ENCODE measurements at regions of chr5 and their contacts with region 1.

Region 1: GRCh38 chr5:173615884-173616576 is 420 bp downstream of the BOD1 start:
- DNase-seq: peak; percentile 73
- CTCF ChIP-seq: peak; percentile 59

Region 2: DNA sequence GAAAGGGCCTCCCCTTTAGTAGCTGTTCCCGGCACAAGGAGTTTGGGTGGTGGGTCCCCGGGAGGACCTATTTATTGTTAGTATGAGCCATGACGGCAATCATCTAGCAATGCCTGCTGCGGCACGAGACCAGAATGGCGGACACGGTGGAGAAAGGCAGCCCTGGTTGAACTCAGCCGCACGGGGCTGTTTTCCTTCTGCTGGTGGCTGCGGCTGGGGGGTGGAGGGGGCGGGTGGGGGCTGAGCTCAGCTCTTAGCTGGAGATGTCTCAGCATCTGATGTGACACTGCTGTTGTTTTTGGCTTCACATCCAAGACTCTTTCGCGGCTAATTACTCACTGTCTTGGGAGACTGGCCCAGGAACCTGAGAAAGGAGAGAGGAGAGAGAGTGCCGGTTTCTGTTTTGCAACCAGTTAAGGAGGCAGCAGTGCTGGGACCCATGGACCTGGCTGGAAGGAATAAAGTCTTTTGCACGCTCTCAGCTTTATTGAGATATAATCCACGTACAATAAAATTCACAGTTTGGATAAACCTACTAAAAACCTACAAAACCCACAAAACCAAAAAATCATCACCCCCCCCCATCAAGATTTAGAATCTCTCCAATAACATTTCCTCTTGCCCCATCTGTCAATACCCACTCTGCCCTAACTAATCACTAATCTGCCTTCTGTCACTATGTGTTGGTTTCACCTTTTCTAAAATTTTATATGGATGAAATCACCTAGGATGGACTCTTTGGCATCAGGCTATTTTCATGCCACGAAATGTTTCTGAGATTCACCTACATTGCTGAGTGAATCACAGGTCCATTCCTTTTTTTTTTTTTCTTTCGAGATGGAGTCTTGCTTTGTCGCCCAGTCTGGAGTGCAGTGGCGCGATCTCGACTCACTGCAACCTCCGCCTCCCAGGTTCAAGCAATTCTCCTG is 1056.8 kb before region 1 on chr5:
- in situ Hi-C with region 1: no loop called
- DNase-seq: no peak
- CTCF ChIP-seq: no peak

Region 3: GRCh38 chr5:172958331-172959046 is 657.5 kb before region 1 on chr5:
- in situ Hi-C with region 1: no loop called
- DNase-seq: peak; percentile 96
- CTCF ChIP-seq: no peak

Region 4: DNA sequence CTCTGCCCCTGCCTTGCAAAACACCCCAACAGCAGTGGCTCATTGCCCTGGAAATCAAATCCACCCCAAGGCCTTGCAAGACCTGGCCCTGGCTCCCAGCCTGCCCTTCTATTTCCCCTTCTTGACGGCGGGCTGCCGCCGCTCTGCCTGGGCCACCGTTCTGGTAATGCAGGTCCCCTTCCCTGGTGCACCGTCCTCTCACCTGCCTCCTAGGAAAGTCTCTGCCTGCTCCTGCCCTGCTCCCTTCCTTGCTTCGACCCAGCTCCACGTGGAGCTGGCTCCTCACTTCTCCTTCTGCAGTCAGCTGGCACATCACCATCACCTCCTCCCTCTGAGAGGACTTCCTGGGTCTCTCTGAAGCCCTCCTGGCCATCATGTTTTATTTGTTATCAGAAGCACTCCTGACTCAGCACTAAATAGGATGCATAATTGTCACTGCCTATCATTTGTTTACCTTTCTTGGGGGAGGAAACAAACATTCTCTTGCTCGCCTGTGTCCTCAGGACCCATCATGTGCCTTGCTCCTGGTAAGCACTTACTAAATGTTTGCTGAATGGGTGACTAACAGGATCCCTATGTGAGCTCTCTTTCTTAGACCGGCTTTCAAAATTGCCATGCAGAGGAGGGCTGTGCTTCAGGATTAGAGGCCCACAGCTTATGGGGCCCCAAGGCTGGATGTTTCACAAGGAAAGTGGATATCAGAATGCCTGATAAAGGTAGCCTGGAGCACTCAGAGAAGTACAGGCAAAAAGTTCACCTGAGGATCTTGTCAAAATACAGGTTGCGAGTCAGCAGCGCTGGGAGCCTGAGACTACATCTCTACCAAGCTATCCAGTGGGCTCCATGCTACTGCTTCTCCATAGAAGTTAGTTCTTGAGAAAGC is 353.4 kb after region 1 on chr5:
- in situ Hi-C with region 1: loop called (anchors 5 kb)
- DNase-seq: peak; percentile 20
- CTCF ChIP-seq: no peak

Region 5: GRCh38 chr5:174311531-174312269 is 695.7 kb after region 1 on chr5:
- in situ Hi-C with region 1: loop called (anchors 25 kb)
- DNase-seq: peak; percentile 89
- CTCF ChIP-seq: peak; percentile 97

Region 6: GRCh38 chr5:174680891-174681565 is 1065.0 kb after region 1 on chr5:
- in situ Hi-C with region 1: no loop called
- DNase-seq: no peak
- CTCF ChIP-seq: no peak

Region 7: DNA sequence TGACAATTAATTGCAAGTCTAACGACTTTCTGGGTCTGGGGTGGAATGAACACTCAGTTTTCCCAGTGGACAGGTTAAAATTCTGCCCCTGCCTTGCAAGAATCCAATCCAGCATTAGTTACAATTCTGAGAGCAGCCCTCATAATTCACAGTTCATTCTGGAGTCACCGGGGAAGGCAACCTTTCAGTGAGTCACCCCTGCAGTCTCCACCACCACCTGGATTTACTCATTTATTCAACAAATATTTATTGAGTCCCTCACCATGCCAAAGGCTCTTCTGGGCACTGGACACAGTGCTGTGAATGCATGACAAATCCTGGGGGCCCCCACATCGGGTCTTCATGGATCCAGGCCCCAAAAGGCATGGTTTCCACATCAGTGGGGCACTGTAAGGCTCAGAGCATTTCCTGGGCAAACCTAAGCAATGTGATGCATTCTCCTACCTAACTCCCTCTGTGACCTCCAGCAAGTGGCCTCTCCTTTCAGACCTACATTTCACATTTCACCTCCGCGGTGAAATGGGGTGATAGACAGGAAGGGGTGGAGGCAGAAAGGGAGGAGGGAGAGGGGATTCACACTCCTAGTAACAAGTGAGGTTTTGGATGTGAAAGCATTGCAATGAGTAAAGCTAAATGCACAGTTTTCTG is 1101.9 kb after region 1 on chr5:
- in situ Hi-C with region 1: no loop called
- DNase-seq: no peak
- CTCF ChIP-seq: no peak

Measured in GM13976 (cell line).